ENCODE measurements at regions of chr1 and their contacts with region 1.

Region 1: GRCh38 chr1:163315773-163316374 is 5.9 kb upstream of the NUF2 start:
- DNase-seq: peak in 1 of 2 donors; percentile 74
- ATAC-seq: no peak
- H3K4me3 ChIP-seq: no peak overlapping the region
- H3K4me3 Mint-ChIP-seq: no peak overlapping the region
- H3K27ac ChIP-seq: no peak overlapping the region
- H3K27ac Mint-ChIP-seq: no peak overlapping the region
- H3K4me1 ChIP-seq: no peaks in the 10 kb centered on the region
- H3K4me1 Mint-ChIP-seq: peaks cover 3% of the 10 kb centered on the region in 2 donors
- H3K27me3 ChIP-seq: no peaks in the 10 kb centered on the region
- H3K27me3 Mint-ChIP-seq: no peaks in the 10 kb centered on the region
- CTCF ChIP-seq: peak; percentile 81

Region 2: DNA sequence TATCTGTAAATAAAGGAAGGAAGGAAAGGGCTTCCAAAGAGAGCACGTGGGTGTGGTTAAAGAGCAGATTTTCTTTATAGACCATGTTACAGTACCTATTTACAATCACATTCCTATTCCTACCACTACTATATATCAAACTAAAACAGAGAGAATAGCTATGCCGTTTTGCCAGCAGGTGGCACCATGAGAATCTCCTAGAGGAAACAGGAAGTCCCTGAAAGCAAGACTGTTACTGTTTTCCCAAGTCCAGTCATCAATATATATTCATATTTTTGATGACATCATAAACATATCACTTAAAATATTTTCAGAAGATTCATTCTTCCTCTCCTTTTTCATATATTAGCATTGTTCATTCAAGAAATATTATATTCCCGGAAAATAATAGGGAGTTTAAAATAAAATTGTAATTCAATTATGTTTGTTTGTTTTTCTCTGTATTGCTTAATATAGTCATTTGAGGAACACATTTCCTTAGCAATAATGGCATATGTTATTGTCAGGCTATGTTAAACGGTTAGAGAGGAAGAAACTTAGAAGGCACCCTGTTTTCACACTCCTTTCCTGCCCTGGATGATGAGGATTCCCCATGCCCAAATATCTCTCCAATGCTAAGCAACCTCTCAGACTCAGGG is 461.5 kb before region 1 on chr1:
- intact Hi-C with region 1: loop called (anchors 1 kb)
- DNase-seq: peak in 1 of 2 donors; percentile 69
- ATAC-seq: peak in 1 of 3 donors; percentile 46
- H3K4me3 ChIP-seq: no peak overlapping the region
- H3K4me3 Mint-ChIP-seq: no peak overlapping the region
- H3K27ac ChIP-seq: no peak overlapping the region
- H3K27ac Mint-ChIP-seq: no peak overlapping the region
- H3K4me1 ChIP-seq: no peaks in the 10 kb centered on the region
- H3K4me1 Mint-ChIP-seq: no peaks in the 10 kb centered on the region
- H3K27me3 ChIP-seq: no peaks in the 10 kb centered on the region
- H3K27me3 Mint-ChIP-seq: peaks cover 11 to 18% of the 10 kb centered on the region in 2 donors
- CTCF ChIP-seq: peak; percentile 71

Measured in natural killer cell (primary cell).